CD8-positive, alpha-beta T cell (primary cell): ENCODE measurements at regions of chr1 and their contacts with region 1.

Region 1: GRCh38 chr1:85502625-85503083 is 37.7 kb upstream of the DDAH1 start:
- DNase-seq: peak in 1 of 9 experiments; percentile 3
- ATAC-seq: no peak
- H3K4me3 ChIP-seq: no peak overlapping the region
- H3K4me3 Mint-ChIP-seq: no peak overlapping the region
- H3K27ac ChIP-seq: no peak overlapping the region
- H3K27ac Mint-ChIP-seq: no peak overlapping the region
- H3K4me1 ChIP-seq: no peaks in the 10 kb centered on the region
- H3K4me1 Mint-ChIP-seq: no peaks in the 10 kb centered on the region
- H3K27me3 ChIP-seq: no peaks in the 10 kb centered on the region
- H3K27me3 Mint-ChIP-seq: peaks cover 15% of the 10 kb centered on the region
- CTCF ChIP-seq: no peak

Region 2: DNA sequence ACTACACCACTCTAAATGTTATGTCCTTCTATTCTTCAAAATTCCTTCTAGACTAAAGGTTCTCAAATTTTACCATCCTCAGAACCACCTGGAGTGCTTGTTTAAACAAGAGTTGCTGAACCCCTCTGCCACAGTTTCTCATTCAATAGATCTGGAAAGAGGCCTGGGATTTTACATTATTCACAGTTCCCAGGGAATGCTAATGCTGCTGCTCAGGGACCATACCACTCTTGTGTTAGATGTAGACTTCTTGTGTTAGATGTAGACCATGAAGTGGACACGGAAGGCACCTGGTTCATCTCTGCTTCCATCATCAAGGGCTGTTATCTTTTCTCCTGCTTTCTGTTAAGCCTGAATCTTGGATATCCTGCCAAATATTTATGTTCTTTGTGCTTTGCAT is 46.6 kb after region 1 on chr1:
- CTCF ChIA-PET with region 1: no interaction called
- POLR2A ChIA-PET with region 1: no interaction called
- intact Hi-C with region 1: loop called in 1 of 2 experiments (anchors 1 kb)
- DNase-seq: no peak
- ATAC-seq: no peak
- H3K4me3 ChIP-seq: no peak overlapping the region
- H3K4me3 Mint-ChIP-seq: no peak overlapping the region
- H3K27ac ChIP-seq: no peak overlapping the region
- H3K27ac Mint-ChIP-seq: no peak overlapping the region
- H3K4me1 ChIP-seq: no peaks in the 10 kb centered on the region
- H3K4me1 Mint-ChIP-seq: no peaks in the 10 kb centered on the region
- H3K27me3 ChIP-seq: no peaks in the 10 kb centered on the region
- H3K27me3 Mint-ChIP-seq: peaks cover 7% of the 10 kb centered on the region
- CTCF ChIP-seq: no peak

Region 3: DNA sequence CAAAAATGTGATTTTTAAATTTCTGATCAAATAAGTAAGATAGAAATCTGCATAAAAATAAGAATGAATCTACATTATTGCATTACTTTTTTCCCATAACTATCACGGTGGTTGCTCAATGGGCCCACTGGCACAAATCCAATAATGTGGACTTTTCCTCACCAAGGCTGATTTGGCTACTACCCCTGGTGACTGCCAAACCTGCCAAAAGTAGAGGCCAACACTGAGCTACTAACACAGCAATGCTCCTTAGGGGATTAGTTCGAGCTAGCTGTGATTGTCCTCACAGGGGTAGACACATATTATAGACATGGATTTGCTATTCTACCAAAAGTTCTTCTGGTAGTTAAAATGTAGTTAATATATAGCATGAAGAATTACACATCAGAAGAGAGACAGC is 313.3 kb after region 1 on chr1:
- CTCF ChIA-PET with region 1: no interaction called
- POLR2A ChIA-PET with region 1: no interaction called
- intact Hi-C with region 1: no loop called
- DNase-seq: no peak
- ATAC-seq: no peak
- H3K4me3 ChIP-seq: no peak overlapping the region
- H3K4me3 Mint-ChIP-seq: no peak overlapping the region
- H3K27ac ChIP-seq: no peak overlapping the region
- H3K27ac Mint-ChIP-seq: no peak overlapping the region
- H3K4me1 ChIP-seq: no peaks in the 10 kb centered on the region
- H3K4me1 Mint-ChIP-seq: no peaks in the 10 kb centered on the region
- H3K27me3 ChIP-seq: no peaks in the 10 kb centered on the region
- H3K27me3 Mint-ChIP-seq: no peaks in the 10 kb centered on the region
- CTCF ChIP-seq: no peak